ENCODE measurements at regions of chr16 and their contacts with region 1.

Region 1: GRCh38 chr16:69330286-69331109 is at the start of gene PDF:
- DNase-seq: peak; percentile 90
- H3K4me3 ChIP-seq: peak within 1 kb of the TSS; percentile 75
- H3K27ac ChIP-seq: peak within 1 kb of the TSS; percentile 70
- H3K4me1 ChIP-seq: peaks cover 48% of the 10 kb centered on the region
- CTCF ChIP-seq: no peak
- total RNA-seq, gene PDF: 54.8 and 85.4 TPM in 2 replicates

Region 2: GRCh38 chr16:69310653-69311532 is 19.6 kb before region 1 on chr16 and contains the start of gene VPS4A:
- CTCF ChIA-PET with region 1: no interaction called
- POLR2A ChIA-PET with region 1: interaction called, 5 read pairs
- intact Hi-C with region 1: loop called (anchors 1 kb)
- DNase-seq: peak; percentile 97
- H3K4me3 ChIP-seq: peak within 1 kb of the TSS; percentile 78
- H3K27ac ChIP-seq: peak within 1 kb of the TSS; percentile 58
- H3K4me1 ChIP-seq: peaks cover 12% of the 10 kb centered on the region
- CTCF ChIP-seq: peak; percentile 72
- total RNA-seq, gene VPS4A: 32.4 and 33.7 TPM in 2 replicates

Region 3: DNA sequence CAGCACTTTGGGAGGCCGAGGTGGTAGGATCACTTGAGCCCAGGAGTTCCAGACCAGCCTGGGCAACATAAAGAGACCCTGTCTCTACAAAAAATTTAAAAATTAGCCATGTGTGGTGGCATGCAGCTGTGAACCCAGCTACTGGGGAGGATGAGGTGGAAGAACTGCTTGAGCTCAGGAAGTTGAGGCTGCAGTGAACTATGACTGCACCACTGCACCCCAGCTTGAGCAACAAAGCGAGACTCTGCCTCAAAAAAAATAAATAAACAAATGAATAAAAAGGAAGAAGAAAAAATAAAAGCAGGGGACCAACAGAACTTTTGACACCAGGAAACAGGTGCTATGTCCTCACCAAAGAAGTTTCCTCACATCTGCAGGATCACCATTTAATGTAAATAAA is 41.1 kb after region 1 on chr16:
- CTCF ChIA-PET with region 1: no interaction called
- POLR2A ChIA-PET with region 1: interaction called, 4 read pairs
- intact Hi-C with region 1: loop called (anchors 1 kb)
- DNase-seq: peak; percentile 88
- H3K4me3 ChIP-seq: peak overlapping the region; percentile 22
- H3K27ac ChIP-seq: peak overlapping the region; percentile 92
- H3K4me1 ChIP-seq: peaks cover 46% of the 10 kb centered on the region
- CTCF ChIP-seq: no peak

Region 4: GRCh38 chr16:69386596-69386995 is 56.1 kb after region 1 on chr16:
- CTCF ChIA-PET with region 1: no interaction called
- POLR2A ChIA-PET with region 1: interaction called, 7 read pairs
- intact Hi-C with region 1: loop called (anchors 2 kb)
- DNase-seq: no peak
- H3K4me3 ChIP-seq: peak overlapping the region; percentile 97
- H3K27ac ChIP-seq: no peak overlapping the region
- H3K4me1 ChIP-seq: peaks cover 27% of the 10 kb centered on the region
- CTCF ChIP-seq: no peak

Measured in OCI-LY7 (cell line).